MCF 10A (cell line): ENCODE measurements at regions of chr1 and their contacts with region 1.

Region 1: DNA sequence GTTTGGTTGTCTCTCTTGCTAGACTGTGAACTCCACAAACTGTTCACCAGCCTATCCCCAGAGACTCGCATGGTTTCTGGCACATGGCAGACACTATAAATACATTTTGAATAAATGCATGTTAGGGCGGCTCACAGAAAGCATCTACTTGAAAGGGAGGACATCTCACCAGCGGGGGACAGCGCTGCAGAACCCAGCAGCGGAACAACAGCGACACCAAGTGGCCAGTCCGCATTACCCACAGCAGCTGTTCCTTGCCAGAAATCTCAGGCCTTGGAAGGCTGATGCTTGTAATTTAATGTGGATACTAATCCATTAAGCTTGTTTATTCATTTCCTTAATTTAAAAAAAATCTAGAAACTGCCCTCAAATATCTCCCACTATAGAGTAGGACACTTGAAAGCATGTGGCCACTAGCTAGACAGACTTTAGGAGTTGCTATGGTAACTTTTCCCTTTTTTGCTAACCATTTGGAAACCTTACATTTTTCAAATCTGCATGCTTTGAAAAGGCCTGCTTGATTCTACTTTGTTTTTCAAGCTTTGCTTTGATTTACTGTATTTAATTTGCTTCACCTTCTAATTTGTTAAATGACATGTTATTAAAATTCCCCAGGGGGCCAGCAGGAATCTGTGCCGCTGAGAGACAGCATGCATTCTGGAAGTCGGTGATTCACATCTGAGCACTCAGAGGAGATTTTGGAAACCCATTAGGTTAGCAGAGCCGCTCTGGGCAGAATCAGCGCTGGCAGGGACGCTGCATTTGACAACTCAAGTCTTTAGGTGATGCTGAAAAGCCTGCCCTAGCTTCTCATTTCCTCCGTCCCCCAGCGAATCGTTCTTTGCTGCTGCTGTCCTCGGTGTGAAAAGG is 63.5 kb upstream of the SSX2IP start:
- DNase-seq: peak; percentile 63
- H3K4me3 Mint-ChIP-seq: no peak overlapping the region
- H3K27ac Mint-ChIP-seq: no peak overlapping the region
- H3K4me1 Mint-ChIP-seq: peaks cover 22% of the 10 kb centered on the region
- H3K27me3 Mint-ChIP-seq: no peaks in the 10 kb centered on the region
- CTCF ChIP-seq: peak; percentile 98

Region 2: GRCh38 chr1:83931658-83932253 is 822.0 kb before region 1 on chr1:
- CTCF ChIA-PET with region 1: interaction called, 3 read pairs
- POLR2A ChIA-PET with region 1: no interaction called
- intact Hi-C with region 1: loop called (anchors 5 kb)
- DNase-seq: peak; percentile 68
- H3K4me3 Mint-ChIP-seq: no peak overlapping the region
- H3K27ac Mint-ChIP-seq: no peak overlapping the region
- H3K4me1 Mint-ChIP-seq: no peaks in the 10 kb centered on the region
- H3K27me3 Mint-ChIP-seq: no peaks in the 10 kb centered on the region
- CTCF ChIP-seq: peak; percentile 62

Region 3: GRCh38 chr1:84442256-84442655 is 311.5 kb before region 1 on chr1:
- CTCF ChIA-PET with region 1: interaction called, 121 read pairs
- POLR2A ChIA-PET with region 1: no interaction called
- intact Hi-C with region 1: loop called (anchors 1 kb)
- DNase-seq: peak; percentile 87
- H3K4me3 Mint-ChIP-seq: no peak overlapping the region
- H3K27ac Mint-ChIP-seq: no peak overlapping the region
- H3K4me1 Mint-ChIP-seq: no peaks in the 10 kb centered on the region
- H3K27me3 Mint-ChIP-seq: no peaks in the 10 kb centered on the region
- CTCF ChIP-seq: peak; percentile 39

Region 4: DNA sequence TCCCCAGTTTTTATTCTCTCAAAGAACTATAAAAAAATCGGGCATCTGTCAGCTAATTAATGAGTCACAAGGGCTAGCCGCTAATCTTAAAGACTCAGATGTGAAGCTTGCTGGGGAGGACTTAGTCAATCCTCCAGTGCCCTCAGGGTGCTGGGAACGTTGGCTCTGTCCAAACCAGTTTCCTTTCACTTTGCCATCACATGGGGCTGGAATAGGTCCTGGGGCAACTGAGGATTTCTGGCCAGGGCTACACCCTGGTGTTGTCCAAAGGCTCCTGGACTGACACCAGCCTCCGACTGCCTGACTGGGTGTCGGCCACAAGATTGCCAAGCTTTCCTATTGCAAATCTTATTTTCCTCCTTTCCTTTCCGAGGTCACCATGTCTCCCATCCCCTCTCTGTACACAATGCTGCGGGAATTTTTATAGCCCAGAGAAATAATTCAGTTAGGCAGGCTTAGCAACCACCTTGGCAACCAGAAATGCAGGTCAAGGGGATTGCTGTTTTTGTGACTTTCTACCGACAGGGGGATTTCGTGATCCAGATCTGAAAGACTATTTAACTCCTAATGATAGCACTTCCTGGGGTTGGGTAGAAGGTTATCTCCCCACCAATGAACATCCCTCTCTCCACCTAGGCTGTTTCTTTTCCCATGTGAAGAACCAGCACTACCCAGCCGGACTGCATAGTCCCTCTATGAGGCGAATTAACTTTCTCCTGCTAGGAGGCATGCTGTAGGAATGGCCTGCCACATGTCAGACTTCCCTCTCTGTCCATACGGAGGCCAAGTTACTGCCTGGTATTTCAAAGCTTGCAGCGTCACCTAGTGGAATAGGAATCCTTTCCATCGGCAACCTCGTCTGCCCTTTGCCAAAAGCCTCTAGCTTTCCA is 149.6 kb before region 1 on chr1:
- CTCF ChIA-PET with region 1: interaction called, 15 read pairs
- POLR2A ChIA-PET with region 1: interaction called, 3 read pairs
- intact Hi-C with region 1: no loop called
- DNase-seq: peak; percentile 96
- H3K4me3 Mint-ChIP-seq: peak overlapping the region; percentile 73
- H3K27ac Mint-ChIP-seq: peak overlapping the region; percentile 76
- H3K4me1 Mint-ChIP-seq: peaks cover 26% of the 10 kb centered on the region
- H3K27me3 Mint-ChIP-seq: no peaks in the 10 kb centered on the region
- CTCF ChIP-seq: peak; percentile 11

Region 5: DNA sequence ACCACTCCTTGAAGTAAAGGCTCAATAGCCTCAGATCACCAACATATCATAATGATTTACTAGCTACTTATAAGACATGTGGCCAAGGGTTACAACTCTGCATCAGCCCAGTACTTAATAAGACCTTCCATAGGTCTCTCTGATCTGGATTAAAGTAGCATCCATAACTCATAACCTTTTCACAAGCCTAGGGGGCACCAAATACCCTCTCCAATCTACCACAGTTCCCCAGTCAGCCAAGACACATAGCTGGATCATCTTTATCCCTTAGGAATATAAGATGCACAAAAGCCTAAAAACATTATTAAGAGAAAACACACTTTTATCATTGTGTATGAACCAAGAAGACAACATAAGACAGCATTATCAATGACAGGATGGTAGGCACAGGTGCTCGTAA is 85.6 kb before region 1 on chr1:
- CTCF ChIA-PET with region 1: interaction called, 6 read pairs
- POLR2A ChIA-PET with region 1: interaction called, 11 read pairs
- intact Hi-C with region 1: loop called (anchors 5 kb)
- DNase-seq: peak; percentile 33
- H3K4me3 Mint-ChIP-seq: no peak overlapping the region
- H3K27ac Mint-ChIP-seq: no peak overlapping the region
- H3K4me1 Mint-ChIP-seq: peaks cover 13% of the 10 kb centered on the region
- H3K27me3 Mint-ChIP-seq: no peaks in the 10 kb centered on the region
- CTCF ChIP-seq: no peak

Region 6: GRCh38 chr1:85091671-85092280 is 338.0 kb after region 1 on chr1:
- CTCF ChIA-PET with region 1: no interaction called
- POLR2A ChIA-PET with region 1: no interaction called
- intact Hi-C with region 1: no loop called
- DNase-seq: peak; percentile 39
- H3K4me3 Mint-ChIP-seq: no peak overlapping the region
- H3K27ac Mint-ChIP-seq: peak overlapping the region; percentile 46
- H3K4me1 Mint-ChIP-seq: peaks cover 11% of the 10 kb centered on the region
- H3K27me3 Mint-ChIP-seq: no peaks in the 10 kb centered on the region
- CTCF ChIP-seq: no peak